ENCODE measurements at regions of chr14 and their contacts with region 1.

Region 1: GRCh38 chr14:88562831-88563686 is at the start of gene ZC3H14:
- DNase-seq: peak; percentile 81 to 91 (median 85)
- H3K4me3 ChIP-seq: peak within 1 kb of the TSS; percentile 83
- H3K27ac ChIP-seq: peak within 1 kb of the TSS; percentile 64 to 89
- H3K4me1 ChIP-seq: peaks cover 1% of the 10 kb centered on the region
- H3K27me3 ChIP-seq: no peaks in the 10 kb centered on the region
- CTCF ChIP-seq: peak in 1 of 3 donors; percentile 11
- EP300 ChIP-seq: no peak
- POLR2A ChIP-seq: peak; percentile 64
- total RNA-seq, gene ZC3H14: 50.4 to 63.2 (median 57.1) TPM

Region 2: GRCh38 chr14:88264116-88264515 is 298.9 kb before region 1 on chr14:
- intact Hi-C with region 1: no loop called
- DNase-seq: no peak
- H3K4me3 ChIP-seq: no peak overlapping the region
- H3K27ac ChIP-seq: no peak overlapping the region
- H3K4me1 ChIP-seq: no peaks in the 10 kb centered on the region
- H3K27me3 ChIP-seq: no peaks in the 10 kb centered on the region
- CTCF ChIP-seq: no peak
- EP300 ChIP-seq: no peak
- POLR2A ChIP-seq: no peak

Region 3: DNA sequence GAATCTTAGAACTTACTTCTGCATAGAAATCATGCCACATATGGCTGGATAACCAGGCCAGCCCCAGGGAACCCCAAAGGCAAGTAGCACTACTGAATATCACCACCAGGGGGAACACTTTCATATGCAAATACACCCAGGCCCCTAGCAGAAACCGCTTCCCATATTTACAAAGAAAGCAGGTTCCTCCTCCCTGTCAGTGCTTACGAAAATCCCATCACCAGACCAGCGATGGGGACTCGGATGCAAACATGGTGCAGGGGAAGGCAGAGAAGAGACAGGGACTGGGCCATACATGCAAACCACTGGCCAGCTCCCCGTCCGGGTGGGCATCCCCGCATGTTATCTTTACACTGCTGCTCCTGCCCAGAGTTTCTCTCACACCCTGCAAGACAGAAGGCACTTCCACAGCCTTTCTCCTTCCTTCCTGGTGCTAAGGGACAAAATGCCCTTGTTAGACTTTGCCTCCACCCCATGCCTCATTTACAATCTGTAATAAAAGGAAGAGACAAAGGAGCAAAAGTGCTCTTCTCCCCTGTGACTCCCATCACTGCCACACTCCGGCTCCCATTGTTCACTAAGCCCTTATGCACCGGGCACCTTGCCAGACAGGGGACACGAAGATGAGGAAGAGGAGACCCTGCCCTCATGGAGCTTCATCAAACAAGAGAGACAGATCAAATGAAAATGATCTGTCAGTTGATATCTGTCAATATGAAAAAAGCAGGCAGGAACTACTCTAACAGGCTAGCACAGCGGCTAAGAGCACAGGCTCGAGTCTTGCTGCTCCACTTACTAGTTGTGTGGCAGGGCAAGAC is 70.6 kb before region 1 on chr14:
- intact Hi-C with region 1: loop called in 3 of 4 experiments (anchors 5 to 10 kb)
- DNase-seq: peak; percentile 39 to 73 (median 53)
- H3K4me3 ChIP-seq: no peak overlapping the region
- H3K27ac ChIP-seq: no peak overlapping the region
- H3K4me1 ChIP-seq: peaks cover 2% of the 10 kb centered on the region
- H3K27me3 ChIP-seq: no peaks in the 10 kb centered on the region
- CTCF ChIP-seq: peak; percentile 62 to 82 (median 81)
- EP300 ChIP-seq: no peak
- POLR2A ChIP-seq: no peak

Region 4: GRCh38 chr14:88584451-88584850 is 21.4 kb after region 1 on chr14:
- intact Hi-C with region 1: no loop called
- DNase-seq: no peak
- H3K4me3 ChIP-seq: no peak overlapping the region
- H3K27ac ChIP-seq: no peak overlapping the region
- H3K4me1 ChIP-seq: no peaks in the 10 kb centered on the region
- H3K27me3 ChIP-seq: no peaks in the 10 kb centered on the region
- CTCF ChIP-seq: no peak
- EP300 ChIP-seq: no peak
- POLR2A ChIP-seq: no peak